Activated CD8-positive, alpha-beta memory T cell treated with anti-CD3 and anti-CD28 coated beads, Interleukin-2, amount 10 ng/mL, durations not matched to agents 7 days and 5 days (primary cell): ENCODE measurements at regions of chr7 and their contacts with region 1.

Region 1: GRCh38 chr7:28921822-28922221 is 36.3 kb downstream of the TRIL start:
- DNase-seq: peak; percentile 51
- ATAC-seq: peak; percentile 82
- H3K4me3 Mint-ChIP-seq: no peak overlapping the region
- H3K27ac Mint-ChIP-seq: no peak overlapping the region
- H3K4me1 Mint-ChIP-seq: peaks cover 14% of the 10 kb centered on the region
- H3K27me3 Mint-ChIP-seq: peaks cover 17% of the 10 kb centered on the region

Region 2: GRCh38 chr7:28732071-28732869 is 189.6 kb before region 1 on chr7:
- CTCF ChIA-PET with region 1: no interaction called
- DNase-seq: no peak
- ATAC-seq: no peak
- H3K4me3 Mint-ChIP-seq: no peak overlapping the region
- H3K27ac Mint-ChIP-seq: no peak overlapping the region
- H3K4me1 Mint-ChIP-seq: no peaks in the 10 kb centered on the region
- H3K27me3 Mint-ChIP-seq: no peaks in the 10 kb centered on the region

Region 3: DNA sequence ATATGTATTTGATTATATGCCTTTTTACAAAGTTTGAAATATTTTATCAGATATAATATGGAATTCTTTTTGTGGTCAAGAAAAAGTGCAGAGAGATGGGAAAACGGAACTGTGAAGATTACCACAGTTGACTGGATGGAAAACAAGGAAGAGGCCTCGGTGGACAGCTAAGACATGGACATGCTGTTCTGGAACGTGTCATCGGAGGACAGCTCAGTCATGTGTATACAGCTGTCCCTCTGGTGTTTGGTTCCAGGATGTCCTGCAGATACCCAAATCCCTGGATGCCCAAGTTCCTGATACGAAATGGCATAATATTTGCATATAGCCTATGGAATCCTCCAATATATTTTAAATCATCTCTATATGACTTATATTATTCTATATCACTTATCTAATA is 13.0 kb before region 1 on chr7:
- CTCF ChIA-PET with region 1: interaction called, 15 read pairs
- DNase-seq: no peak
- ATAC-seq: no peak
- H3K4me3 Mint-ChIP-seq: no peak overlapping the region
- H3K27ac Mint-ChIP-seq: no peak overlapping the region
- H3K4me1 Mint-ChIP-seq: no peaks in the 10 kb centered on the region
- H3K27me3 Mint-ChIP-seq: peaks cover 16% of the 10 kb centered on the region

Region 4: DNA sequence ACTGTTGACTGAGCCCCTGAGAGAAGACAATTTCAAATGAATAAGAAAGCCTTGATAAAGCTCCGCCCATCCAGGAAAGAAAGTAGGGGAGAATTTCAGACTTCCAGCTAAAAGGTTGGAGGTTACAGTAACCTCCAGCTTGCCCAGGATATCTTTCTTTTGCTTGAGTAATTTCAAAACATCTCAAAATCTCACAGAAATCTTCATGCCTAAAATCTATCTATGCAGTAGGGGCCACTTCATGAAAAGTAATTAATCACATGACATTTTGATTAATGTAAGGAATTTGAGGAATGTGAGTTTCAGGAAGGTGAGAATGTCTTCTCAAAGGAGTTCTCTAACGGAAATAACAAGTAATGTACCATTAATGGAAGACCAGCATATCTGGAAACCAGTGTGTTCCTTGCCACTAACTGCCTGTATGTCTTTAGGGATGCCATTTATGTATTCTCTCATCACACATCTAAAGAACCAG is 12.1 kb after region 1 on chr7:
- CTCF ChIA-PET with region 1: interaction called, 21 read pairs
- DNase-seq: no peak
- ATAC-seq: no peak
- H3K4me3 Mint-ChIP-seq: no peak overlapping the region
- H3K27ac Mint-ChIP-seq: no peak overlapping the region
- H3K4me1 Mint-ChIP-seq: no peaks in the 10 kb centered on the region
- H3K27me3 Mint-ChIP-seq: peaks cover 18% of the 10 kb centered on the region

Region 5: GRCh38 chr7:28955718-28956619 is 34.1 kb after region 1 on chr7:
- CTCF ChIA-PET with region 1: interaction called, 34 read pairs
- DNase-seq: no peak
- ATAC-seq: peak; percentile 16
- H3K4me3 Mint-ChIP-seq: no peak overlapping the region
- H3K27ac Mint-ChIP-seq: no peak overlapping the region
- H3K4me1 Mint-ChIP-seq: peaks cover 10% of the 10 kb centered on the region
- H3K27me3 Mint-ChIP-seq: peaks cover 81% of the 10 kb centered on the region

Region 6: GRCh38 chr7:29091715-29092114 is 169.9 kb after region 1 on chr7:
- CTCF ChIA-PET with region 1: interaction called, 289 read pairs
- DNase-seq: no peak
- ATAC-seq: peak; percentile 91
- H3K4me3 Mint-ChIP-seq: peak overlapping the region; percentile 70
- H3K27ac Mint-ChIP-seq: peak overlapping the region; percentile 85
- H3K4me1 Mint-ChIP-seq: peaks cover 23% of the 10 kb centered on the region
- H3K27me3 Mint-ChIP-seq: peaks cover 18% of the 10 kb centered on the region

Region 7: DNA sequence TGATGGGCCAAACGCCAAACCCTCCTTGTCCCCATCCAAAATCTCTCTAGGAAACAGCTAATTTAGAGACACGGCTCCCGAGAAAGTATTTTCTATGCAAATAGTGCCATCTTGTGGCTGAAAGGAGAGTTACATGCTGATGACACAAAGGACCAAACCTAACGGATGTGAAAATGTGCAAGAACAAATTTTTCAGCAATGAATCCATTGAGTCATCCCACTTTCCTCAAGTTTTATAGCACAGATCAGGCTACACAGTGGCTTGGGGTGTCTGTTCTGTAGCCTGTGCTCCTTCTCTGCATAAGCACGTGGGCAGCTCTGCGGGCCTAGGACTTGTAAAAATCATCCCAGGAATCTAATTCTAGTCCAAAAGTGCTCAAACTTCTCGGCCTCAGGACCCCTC is 487.0 kb after region 1 on chr7:
- CTCF ChIA-PET with region 1: interaction called, 43 read pairs
- DNase-seq: peak; percentile 63
- ATAC-seq: peak; percentile 55
- H3K4me3 Mint-ChIP-seq: no peak overlapping the region
- H3K27ac Mint-ChIP-seq: no peak overlapping the region
- H3K4me1 Mint-ChIP-seq: peaks cover 2% of the 10 kb centered on the region
- H3K27me3 Mint-ChIP-seq: no peaks in the 10 kb centered on the region